Ovary (tissue), 10 donors: ENCODE measurements at regions of chr10 and their contacts with region 1.

Region 1: GRCh38 chr10:3040069-3040468 is 27.3 kb upstream of the PFKP start:
- DNase-seq: no peak
- H3K4me3 ChIP-seq: no peak overlapping the region
- H3K27ac ChIP-seq: no peak overlapping the region
- H3K4me1 ChIP-seq: no peaks in the 10 kb centered on the region
- H3K27me3 ChIP-seq: no peaks in the 10 kb centered on the region
- CTCF ChIP-seq: no peak
- EP300 ChIP-seq: no peak
- POLR2A ChIP-seq: no peak

Region 2: GRCh38 chr10:2813286-2813685 is 226.8 kb before region 1 on chr10:
- intact Hi-C with region 1: no loop called
- DNase-seq: no peak
- H3K4me3 ChIP-seq: no peak overlapping the region
- H3K27ac ChIP-seq: no peak overlapping the region
- H3K4me1 ChIP-seq: no peaks in the 10 kb centered on the region
- H3K27me3 ChIP-seq: no peaks in the 10 kb centered on the region
- CTCF ChIP-seq: no peak
- EP300 ChIP-seq: no peak
- POLR2A ChIP-seq: no peak

Region 3: GRCh38 chr10:3014968-3015367 is 25.1 kb before region 1 on chr10:
- intact Hi-C with region 1: loop called in 1 of 4 experiments (anchors 1 kb)
- DNase-seq: no peak
- H3K4me3 ChIP-seq: no peak overlapping the region
- H3K27ac ChIP-seq: no peak overlapping the region
- H3K4me1 ChIP-seq: no peaks in the 10 kb centered on the region
- H3K27me3 ChIP-seq: no peaks in the 10 kb centered on the region
- CTCF ChIP-seq: no peak
- EP300 ChIP-seq: no peak
- POLR2A ChIP-seq: no peak